T-cell (primary cell): ENCODE measurements at regions of chr19 and their contacts with region 1.

Region 1: DNA sequence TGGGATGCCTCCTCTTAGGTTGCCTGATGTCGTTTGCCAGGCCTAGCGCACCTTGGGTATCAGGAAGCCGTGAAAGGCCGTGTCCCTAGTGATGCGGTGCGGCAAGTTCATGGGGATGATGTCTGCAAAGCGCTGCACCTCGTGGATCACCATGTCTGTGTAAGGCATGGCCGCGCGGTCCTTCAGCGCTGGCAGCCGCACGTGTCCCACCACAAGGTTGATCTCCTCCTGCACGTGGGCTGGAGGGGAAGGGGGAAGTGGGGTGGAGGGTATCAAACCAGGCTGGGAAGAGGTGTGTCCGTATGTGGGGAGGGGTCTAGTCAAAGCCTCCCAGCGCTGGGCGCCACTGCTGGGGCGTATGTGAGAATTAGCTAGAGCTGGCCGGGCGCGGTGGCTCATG is 23.2 kb downstream of the EGLN2 start:
- DNase-seq: no peak
- ATAC-seq: no peak
- H3K4me3 ChIP-seq: no peak overlapping the region
- H3K4me3 Mint-ChIP-seq: no peak overlapping the region
- H3K27ac ChIP-seq: no peak overlapping the region
- H3K27ac Mint-ChIP-seq: peak overlapping the region in 1 of 2 donors; percentile 43
- H3K4me1 ChIP-seq: peaks cover 10 to 55% of the 10 kb centered on the region in 2 experiments
- H3K4me1 Mint-ChIP-seq: peaks cover 43 to 54% (median 46%) of the 10 kb centered on the region in 3 donors
- H3K27me3 ChIP-seq: no peaks in the 10 kb centered on the region
- H3K27me3 Mint-ChIP-seq: no peaks in the 10 kb centered on the region

Region 2: DNA sequence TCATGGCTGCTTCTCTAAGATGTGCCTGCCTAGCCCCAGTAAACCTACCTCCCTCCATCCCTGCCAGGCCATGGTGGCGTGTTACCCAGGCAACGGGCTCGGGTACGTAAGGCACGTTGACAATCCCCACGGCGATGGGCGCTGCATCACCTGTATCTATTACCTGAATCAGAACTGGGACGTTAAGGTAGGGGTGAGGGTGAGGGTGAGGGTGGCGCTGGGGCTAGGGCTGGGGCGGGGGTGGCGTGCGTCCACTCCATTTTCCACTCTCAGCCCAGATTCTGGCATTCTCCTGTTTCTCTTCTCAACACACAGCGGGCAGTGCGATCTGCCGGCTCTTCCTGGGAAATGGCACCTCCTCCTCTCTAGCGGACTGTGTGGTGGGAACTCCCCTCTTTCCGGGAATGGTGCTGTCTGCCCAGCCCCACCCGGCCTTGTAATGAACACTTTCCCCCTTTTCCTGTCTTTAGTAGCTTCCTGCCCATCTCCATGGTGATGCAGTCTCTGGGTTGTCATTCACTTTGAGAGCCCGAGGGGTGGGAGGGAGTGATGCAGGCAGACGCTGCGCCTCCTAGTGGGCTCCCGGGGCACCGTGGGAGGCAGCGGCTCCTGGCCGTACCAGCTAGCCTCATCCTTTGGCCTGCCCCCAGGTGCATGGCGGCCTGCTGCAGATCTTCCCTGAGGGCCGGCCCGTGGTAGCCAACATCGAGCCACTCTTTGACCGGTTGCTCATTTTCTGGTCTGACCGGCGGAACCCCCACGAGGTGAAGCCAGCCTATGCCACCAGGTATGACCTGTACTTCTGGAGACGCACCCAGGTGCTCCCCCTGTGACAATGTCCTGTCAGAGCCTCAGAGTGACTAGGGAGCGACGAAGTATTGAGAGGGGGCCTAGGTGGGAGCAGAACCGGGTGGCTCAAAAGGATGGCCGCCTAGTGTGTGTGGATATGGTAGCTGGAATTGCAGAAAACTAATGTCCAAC is 15.4 kb before region 1 on chr19:
- CTCF ChIA-PET with region 1: interaction called, 3 to 10 read pairs
- POLR2A ChIA-PET with region 1: no interaction called
- DNase-seq: peak; percentile 41 to 91 (median 75)
- ATAC-seq: peak; percentile 34 to 62 (median 44)
- H3K4me3 ChIP-seq: peak overlapping the region; percentile 6 to 38
- H3K4me3 Mint-ChIP-seq: peak overlapping the region; percentile 58 to 93 (median 84)
- H3K27ac ChIP-seq: peak overlapping the region; percentile 85
- H3K27ac Mint-ChIP-seq: peak overlapping the region; percentile 96 to 99
- H3K4me1 ChIP-seq: peaks cover 64 to 99% of the 10 kb centered on the region in 2 experiments
- H3K4me1 Mint-ChIP-seq: peaks cover 87 to 96% (median 96%) of the 10 kb centered on the region in 3 donors
- H3K27me3 ChIP-seq: peaks cover 0 to 1% of the 10 kb centered on the region in 2 experiments
- H3K27me3 Mint-ChIP-seq: no peaks in the 10 kb centered on the region